Gastrocnemius medialis (tissue), 4 donors: ENCODE measurements at regions of chr12 and their contacts with region 1.

Region 1: GRCh38 chr12:113196996-113197395 is 11.5 kb downstream of the RITA1 start:
- DNase-seq: peak; percentile 67 to 79
- ATAC-seq: peak; percentile 82 to 88
- H3K4me3 ChIP-seq: no peak overlapping the region
- H3K27ac ChIP-seq: no peak overlapping the region
- H3K4me1 ChIP-seq: peaks cover 12 to 21% of the 10 kb centered on the region in 2 donors
- H3K27me3 ChIP-seq: no peaks in the 10 kb centered on the region
- CTCF ChIP-seq: peak; percentile 33 to 78 (median 58)
- POLR2A ChIP-seq: no peak

Region 2: GRCh38 chr12:113152835-113153814 is 43.9 kb before region 1 on chr12:
- in situ Hi-C with region 1: no loop called
- intact Hi-C with region 1: no loop called
- DNase-seq: no peak
- ATAC-seq: peak in 1 of 2 donors; percentile 28
- H3K4me3 ChIP-seq: peak overlapping the region; percentile 5 to 55 (median 32)
- H3K27ac ChIP-seq: no peak overlapping the region
- H3K4me1 ChIP-seq: no peaks in the 10 kb centered on the region
- H3K27me3 ChIP-seq: peaks cover 50 to 67% (median 53%) of the 10 kb centered on the region in 3 donors
- CTCF ChIP-seq: peak in 2 of 5 experiments; percentile 17 to 29
- POLR2A ChIP-seq: no peak

Region 3: DNA sequence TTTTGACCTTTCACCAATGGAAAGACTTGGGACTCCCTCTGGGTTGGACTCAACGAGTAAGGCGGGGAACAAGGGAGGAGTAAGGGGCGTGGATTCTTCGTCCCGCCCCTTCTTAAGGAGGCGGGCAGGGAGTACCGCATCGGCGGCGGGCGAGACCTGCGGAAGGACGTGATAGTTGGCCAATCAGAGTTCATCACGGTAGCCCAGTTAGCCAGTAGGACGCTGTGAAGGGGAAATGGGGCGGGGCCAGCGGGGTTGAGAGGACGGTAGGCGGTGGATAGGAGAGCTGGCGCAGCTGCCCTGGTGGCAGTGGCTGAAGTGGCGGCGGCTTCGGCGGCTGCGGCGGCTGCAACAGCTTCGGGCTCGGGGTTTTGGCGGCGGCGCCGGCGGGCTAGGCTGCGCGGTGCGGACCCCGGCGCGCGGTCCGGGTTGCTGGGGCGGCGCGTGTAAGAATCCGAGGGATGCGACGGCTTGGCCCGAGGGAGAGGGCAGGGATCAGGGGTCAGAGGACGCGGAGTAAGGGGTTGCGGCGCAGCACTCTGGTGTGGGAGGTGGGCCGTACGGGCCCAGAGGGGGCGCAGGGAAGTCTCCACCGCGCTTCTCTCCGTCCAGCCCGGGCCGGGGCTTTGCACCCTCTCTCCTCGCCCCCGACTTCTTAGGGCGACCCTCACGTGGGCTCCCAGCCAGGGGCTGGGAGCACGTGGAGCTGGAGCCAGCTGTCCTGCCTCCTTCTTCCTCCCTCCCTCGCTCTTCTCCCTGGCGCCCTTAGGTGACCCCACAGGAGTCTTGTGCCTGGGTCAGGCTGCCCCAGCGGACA is 24.4 kb after region 1 on chr12 and contains the start of gene TPCN1:
- in situ Hi-C with region 1: no loop called
- intact Hi-C with region 1: loop called (anchors 2 kb)
- DNase-seq: peak; percentile 100
- ATAC-seq: peak; percentile 86 to 93
- H3K4me3 ChIP-seq: peak within 1 kb of the TSS; percentile 72 to 89 (median 80)
- H3K27ac ChIP-seq: peak within 1 kb of the TSS; percentile 92 to 99 (median 96)
- H3K4me1 ChIP-seq: peaks cover 37 to 41% of the 10 kb centered on the region in 2 donors
- H3K27me3 ChIP-seq: no peaks in the 10 kb centered on the region
- CTCF ChIP-seq: peak in 4 of 5 experiments; percentile 7 to 13 (median 12)
- POLR2A ChIP-seq: peak; percentile 99 to 100
- total RNA-seq, gene TPCN1: 21.4 to 27.0 (median 25.4) TPM

Region 4: GRCh38 chr12:113299619-113300237 is 102.7 kb after region 1 on chr12:
- in situ Hi-C with region 1: loop called in 2 of 4 experiments (anchors 10 to 25 kb)
- intact Hi-C with region 1: loop called (anchors 10 kb)
- DNase-seq: peak; percentile 23 to 71
- ATAC-seq: peak; percentile 57
- H3K4me3 ChIP-seq: no peak overlapping the region
- H3K27ac ChIP-seq: peak overlapping the region; percentile 76 to 89 (median 80)
- H3K4me1 ChIP-seq: peaks cover 27 to 30% of the 10 kb centered on the region in 2 donors
- H3K27me3 ChIP-seq: no peaks in the 10 kb centered on the region
- CTCF ChIP-seq: no peak
- POLR2A ChIP-seq: no peak

Region 5: GRCh38 chr12:113334786-113335540 is 138.0 kb after region 1 on chr12 and contains the start of gene SLC8B1:
- in situ Hi-C with region 1: no loop called
- intact Hi-C with region 1: loop called (anchors 10 kb)
- DNase-seq: peak; percentile 74 to 85
- ATAC-seq: peak; percentile 90 to 95
- H3K4me3 ChIP-seq: peak within 1 kb of the TSS; percentile 77 to 85 (median 82)
- H3K27ac ChIP-seq: peak within 1 kb of the TSS; percentile 80 to 85 (median 82)
- H3K4me1 ChIP-seq: peaks cover 11 to 16% of the 10 kb centered on the region in 2 donors
- H3K27me3 ChIP-seq: no peaks in the 10 kb centered on the region
- CTCF ChIP-seq: no peak
- POLR2A ChIP-seq: peak; percentile 89 to 92
- total RNA-seq, gene SLC8B1: 8.2 to 21.2 (median 14.5) TPM

Region 6: DNA sequence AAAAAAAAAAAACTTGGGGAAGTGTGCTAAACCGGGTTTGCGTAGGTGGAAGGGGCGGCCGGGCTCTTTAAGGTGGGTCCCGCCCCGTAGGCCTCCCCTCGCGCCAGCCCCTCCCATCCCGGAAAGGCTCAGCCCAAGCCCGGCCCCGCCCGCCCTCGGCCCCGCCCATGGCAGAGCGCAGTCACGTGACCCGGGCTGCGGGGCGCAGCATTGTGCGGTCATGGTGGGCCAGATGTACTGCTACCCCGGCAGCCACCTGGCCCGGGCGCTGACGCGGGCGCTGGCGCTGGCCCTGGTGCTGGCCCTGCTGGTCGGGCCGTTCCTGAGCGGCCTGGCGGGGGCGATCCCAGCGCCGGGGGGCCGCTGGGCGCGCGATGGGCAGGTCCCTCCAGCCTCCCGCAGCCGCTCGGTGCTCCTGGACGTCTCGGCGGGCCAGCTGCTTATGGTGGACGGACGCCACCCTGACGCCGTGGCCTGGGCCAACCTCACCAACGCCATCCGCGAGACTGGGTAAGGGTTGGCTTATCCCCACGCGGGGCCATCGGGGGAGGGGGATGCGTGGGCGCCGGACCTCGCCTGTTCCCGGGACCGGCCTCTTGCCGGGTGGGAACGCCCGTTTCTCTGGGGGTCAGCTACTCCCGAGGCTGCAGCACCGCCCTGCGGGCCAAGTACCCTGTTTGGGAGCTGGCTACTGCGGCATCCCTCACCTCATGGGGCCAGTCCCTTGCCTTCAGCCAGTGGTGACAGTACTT is 161.6 kb after region 1 on chr12 and contains the start of gene PLBD2:
- in situ Hi-C with region 1: no loop called
- intact Hi-C with region 1: loop called (anchors 2 kb)
- DNase-seq: peak; percentile 92 to 93
- ATAC-seq: peak; percentile 94 to 95
- H3K4me3 ChIP-seq: peak within 1 kb of the TSS; percentile 66 to 91 (median 80)
- H3K27ac ChIP-seq: peak within 1 kb of the TSS; percentile 85 to 92 (median 90)
- H3K4me1 ChIP-seq: peaks cover 14% of the 10 kb centered on the region in 2 donors
- H3K27me3 ChIP-seq: no peaks in the 10 kb centered on the region
- CTCF ChIP-seq: peak in 1 of 5 experiments; percentile 20
- POLR2A ChIP-seq: peak; percentile 76 to 77
- total RNA-seq, gene PLBD2: 12.0 to 28.9 (median 26.8) TPM

Region 7: GRCh38 chr12:113422030-113422885 is 225.3 kb after region 1 on chr12 and contains the start of gene SDSL:
- in situ Hi-C with region 1: no loop called
- intact Hi-C with region 1: loop called (anchors 2 kb)
- DNase-seq: peak; percentile 26 to 52
- ATAC-seq: peak; percentile 60 to 71
- H3K4me3 ChIP-seq: peak within 1 kb of the TSS; percentile 34 to 56 (median 43)
- H3K27ac ChIP-seq: peak within 1 kb of the TSS in 2 of 4 donors; percentile 24 to 48
- H3K4me1 ChIP-seq: peaks cover 0 to 8% of the 10 kb centered on the region in 2 donors
- H3K27me3 ChIP-seq: no peaks in the 10 kb centered on the region
- CTCF ChIP-seq: no peak
- POLR2A ChIP-seq: peak in 1 of 2 donors; percentile 15
- total RNA-seq, gene SDSL: 0.91 to 1.4 (median 0.98) TPM in 3 of 4 donors, not detected in the other

Region 8: DNA sequence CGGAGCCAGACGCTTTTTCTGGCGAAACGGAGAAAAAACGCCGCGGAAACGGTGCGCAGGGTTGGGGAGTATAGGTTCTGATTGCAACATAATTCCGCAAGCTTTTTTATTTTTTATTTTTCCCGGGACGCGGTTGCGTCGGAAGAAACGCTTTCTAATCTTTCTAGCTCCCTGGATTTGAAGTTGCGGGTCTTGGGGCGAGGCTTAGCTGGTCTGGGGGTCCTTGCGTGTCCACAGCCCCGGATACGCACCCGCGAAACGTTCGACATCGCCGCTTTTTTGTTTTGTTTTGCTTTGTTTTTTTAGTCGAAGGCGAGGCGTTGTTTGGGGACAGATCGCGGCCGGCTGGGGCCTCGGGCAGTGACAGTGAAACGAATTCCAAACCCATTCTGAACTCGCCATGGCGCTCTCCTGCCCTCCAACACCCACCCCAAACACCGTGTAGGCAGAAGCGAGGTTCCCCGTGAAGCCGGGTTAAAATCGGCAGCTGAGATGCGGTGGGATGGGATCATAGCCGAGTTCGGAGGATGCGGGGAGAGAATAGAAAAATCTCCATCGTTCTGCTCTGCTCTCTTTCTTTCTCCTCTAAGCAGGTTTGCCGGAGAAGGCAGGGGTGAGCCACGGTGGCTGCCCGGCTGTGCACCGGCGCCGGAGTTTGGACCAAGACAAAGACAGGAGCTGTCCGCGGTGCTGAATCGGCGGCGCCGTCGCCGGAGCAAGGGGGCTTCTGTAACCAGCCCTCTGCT is 282.8 kb after region 1 on chr12:
- in situ Hi-C with region 1: no loop called
- intact Hi-C with region 1: no loop called
- DNase-seq: no peak
- ATAC-seq: no peak
- H3K4me3 ChIP-seq: no peak overlapping the region
- H3K27ac ChIP-seq: no peak overlapping the region
- H3K4me1 ChIP-seq: no peaks in the 10 kb centered on the region
- H3K27me3 ChIP-seq: peaks cover 66 to 74% (median 67%) of the 10 kb centered on the region in 3 donors
- CTCF ChIP-seq: no peak
- POLR2A ChIP-seq: no peak